Left cardiac atrium (tissue), 4 donors: ENCODE measurements at regions of chr10 and their contacts with region 1.

Region 1: DNA sequence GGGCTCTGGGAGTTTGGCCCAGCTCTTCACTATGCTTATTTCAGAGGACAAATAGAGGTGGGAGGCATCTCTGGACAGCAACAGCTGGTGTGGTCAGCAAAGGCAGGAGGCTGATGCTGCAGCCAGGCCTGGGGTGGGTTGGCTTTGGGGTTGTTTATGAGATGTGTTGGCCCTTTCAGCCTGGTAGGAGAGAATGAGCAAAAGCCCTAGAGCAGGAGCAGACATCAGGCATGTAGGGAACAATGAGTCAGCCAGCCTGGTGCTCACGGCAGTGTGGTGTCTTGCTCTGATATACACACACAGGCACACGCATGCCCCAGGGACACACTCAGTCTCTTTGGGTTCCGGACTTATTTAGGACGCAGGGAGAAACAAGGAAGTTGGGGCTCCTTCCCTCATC is 157.1 kb downstream of the PRKCQ start:
- DNase-seq: no peak
- ATAC-seq: no peak

Region 2: DNA sequence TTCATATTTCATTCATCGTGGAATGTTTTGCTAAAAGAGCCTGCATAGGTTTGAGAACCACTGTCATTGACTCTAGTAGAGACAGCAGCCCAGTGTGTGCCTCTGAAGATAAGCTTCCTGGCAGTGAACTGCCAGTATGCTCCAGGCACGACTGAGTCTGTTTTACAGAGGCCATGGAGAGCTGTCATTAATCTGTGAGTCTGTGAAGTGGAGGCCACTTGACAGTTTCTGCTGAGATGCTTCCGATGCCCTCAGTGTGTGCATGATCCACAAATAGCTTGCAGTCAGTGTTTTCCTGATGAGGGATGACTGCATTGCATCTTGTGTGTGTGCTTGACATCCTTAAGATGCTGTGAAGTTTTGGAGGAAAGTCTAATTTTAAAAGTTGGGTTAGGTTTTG is 58.1 kb before region 1 on chr10:
- intact Hi-C with region 1: no loop called
- DNase-seq: no peak
- ATAC-seq: peak; percentile 92 to 96

Region 3: DNA sequence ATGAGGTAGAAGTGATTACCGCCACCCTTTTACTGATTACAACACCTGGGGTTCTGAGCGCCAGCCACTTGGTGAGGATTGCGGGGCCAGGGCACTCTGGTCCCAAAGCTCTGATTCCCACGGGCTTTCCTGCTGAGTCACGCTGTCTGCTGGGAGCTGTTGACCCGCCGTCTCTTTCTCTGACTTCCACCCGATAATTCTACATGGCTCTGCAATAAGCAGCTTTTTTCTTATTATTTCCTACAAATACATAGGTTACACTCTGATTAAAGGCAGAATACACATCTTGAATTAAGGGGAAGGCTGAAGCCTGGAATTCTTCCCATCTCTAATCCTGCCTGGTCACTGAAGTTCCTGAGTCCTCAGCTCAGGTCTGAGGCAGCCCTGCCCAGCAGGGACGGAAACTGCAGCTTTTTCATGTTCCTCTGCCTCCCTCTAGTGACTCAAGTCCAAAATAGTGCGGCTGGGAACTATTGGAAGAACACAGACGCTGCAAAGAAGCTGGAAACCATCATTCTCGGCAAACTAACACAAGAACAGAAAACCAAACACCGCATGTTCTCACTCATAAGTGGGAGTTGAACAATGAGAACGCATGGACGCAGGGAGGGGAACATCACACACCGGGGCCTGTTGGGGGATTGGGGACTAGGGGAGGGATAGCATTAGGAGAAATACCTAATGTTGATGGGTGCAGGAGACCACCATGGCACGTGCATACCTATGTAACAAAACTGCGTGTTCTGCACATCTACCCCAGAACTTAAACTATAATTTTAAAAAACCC is 21.2 kb before region 1 on chr10:
- intact Hi-C with region 1: no loop called
- DNase-seq: peak; percentile 80
- ATAC-seq: peak; percentile 95 to 97

Region 4: GRCh38 chr10:6678211-6678803 is 255.3 kb after region 1 on chr10:
- intact Hi-C with region 1: loop called in 1 of 2 experiments (anchors 10 kb)
- DNase-seq: peak; percentile 49
- ATAC-seq: peak in 1 of 2 donors; percentile 54